PC-3 (cell line): ENCODE measurements at regions of chr9 and their contacts with region 1.

Region 1: DNA sequence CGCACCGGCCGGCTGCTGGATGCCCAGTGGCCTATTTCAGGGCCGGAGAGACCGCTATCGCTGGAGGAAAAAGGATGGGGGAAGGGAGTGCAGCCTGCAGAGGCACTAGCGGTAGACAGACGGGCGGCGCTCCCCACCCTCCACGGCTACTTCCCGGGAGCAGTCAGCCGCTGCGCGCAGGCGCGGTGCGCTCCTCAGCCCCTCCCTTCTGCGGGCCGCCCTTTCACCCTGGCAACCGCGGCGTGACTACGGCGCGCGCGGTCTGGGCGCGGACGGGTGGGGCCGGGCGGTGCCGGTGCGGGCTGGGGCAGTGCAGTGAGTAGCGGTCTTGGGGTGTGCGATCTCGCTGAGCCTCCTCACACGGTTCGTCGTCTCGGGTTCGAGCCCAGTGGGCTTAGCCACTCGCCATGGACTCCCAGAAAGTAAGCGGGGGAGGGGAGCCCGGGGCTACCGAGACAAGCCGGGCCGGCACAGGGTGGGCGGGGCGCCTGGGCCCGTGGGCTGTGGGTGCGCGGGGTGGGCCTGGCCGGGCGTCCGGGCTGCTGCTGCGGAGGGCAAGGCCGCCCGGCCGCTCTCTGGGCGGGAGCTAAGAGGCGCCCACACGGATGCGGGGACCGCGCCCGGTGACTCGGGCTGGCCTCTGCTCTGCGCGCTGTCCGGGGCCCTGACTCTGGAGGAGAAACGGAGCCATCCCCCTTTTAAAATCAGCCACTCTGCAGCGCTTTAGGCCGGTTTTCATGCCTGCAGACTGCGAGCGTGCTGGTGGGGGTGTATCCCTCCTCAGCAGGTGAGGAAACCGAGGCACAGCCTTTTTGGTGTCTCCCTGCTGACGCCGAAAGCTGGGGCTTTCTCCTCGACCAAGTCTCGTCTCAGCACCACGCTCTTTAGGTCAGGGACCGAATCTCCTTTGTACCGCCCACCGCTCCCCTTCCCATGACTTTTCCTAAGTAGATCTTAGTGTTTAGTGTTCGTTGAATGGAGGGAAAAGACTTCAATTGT is at the start of gene FSD1L:
- DNase-seq: peak; percentile 87
- ATAC-seq: peak; percentile 82
- H3K4me3 ChIP-seq: peak within 1 kb of the TSS; percentile 84
- H3K27ac ChIP-seq: no peak within 1 kb of the TSS
- H3K4me1 ChIP-seq: peaks cover 8% of the 10 kb centered on the region; the same call in 1 of the 2 replicates
- H3K27me3 ChIP-seq: no peaks in the 10 kb centered on the region
- CTCF ChIP-seq: peak; percentile 40
- total RNA-seq, gene FSD1L: 1.7 and 2.1 TPM in 2 replicates

Region 2: GRCh38 chr9:103586721-103587120 is 1861.4 kb before region 1 on chr9:
- CTCF ChIA-PET with region 1: interaction called, 10 read pairs
- POLR2A ChIA-PET with region 1: no interaction called
- intact Hi-C with region 1: no loop called
- DNase-seq: no peak
- ATAC-seq: no peak
- H3K4me3 ChIP-seq: no peak overlapping the region
- H3K27ac ChIP-seq: no peak overlapping the region
- H3K4me1 ChIP-seq: no peaks in the 10 kb centered on the region
- H3K27me3 ChIP-seq: no peaks in the 10 kb centered on the region
- CTCF ChIP-seq: no peak

Region 3: GRCh38 chr9:105466898-105467455 is 18.9 kb after region 1 on chr9:
- CTCF ChIA-PET with region 1: no interaction called
- POLR2A ChIA-PET with region 1: no interaction called
- intact Hi-C with region 1: no loop called
- DNase-seq: no peak
- ATAC-seq: no peak
- H3K4me3 ChIP-seq: no peak overlapping the region
- H3K27ac ChIP-seq: no peak overlapping the region
- H3K4me1 ChIP-seq: no peaks in the 10 kb centered on the region
- H3K27me3 ChIP-seq: no peaks in the 10 kb centered on the region
- CTCF ChIP-seq: no peak